HepG2 (cell line): ENCODE measurements at regions of chr5 and their contacts with region 1.

Region 1: DNA sequence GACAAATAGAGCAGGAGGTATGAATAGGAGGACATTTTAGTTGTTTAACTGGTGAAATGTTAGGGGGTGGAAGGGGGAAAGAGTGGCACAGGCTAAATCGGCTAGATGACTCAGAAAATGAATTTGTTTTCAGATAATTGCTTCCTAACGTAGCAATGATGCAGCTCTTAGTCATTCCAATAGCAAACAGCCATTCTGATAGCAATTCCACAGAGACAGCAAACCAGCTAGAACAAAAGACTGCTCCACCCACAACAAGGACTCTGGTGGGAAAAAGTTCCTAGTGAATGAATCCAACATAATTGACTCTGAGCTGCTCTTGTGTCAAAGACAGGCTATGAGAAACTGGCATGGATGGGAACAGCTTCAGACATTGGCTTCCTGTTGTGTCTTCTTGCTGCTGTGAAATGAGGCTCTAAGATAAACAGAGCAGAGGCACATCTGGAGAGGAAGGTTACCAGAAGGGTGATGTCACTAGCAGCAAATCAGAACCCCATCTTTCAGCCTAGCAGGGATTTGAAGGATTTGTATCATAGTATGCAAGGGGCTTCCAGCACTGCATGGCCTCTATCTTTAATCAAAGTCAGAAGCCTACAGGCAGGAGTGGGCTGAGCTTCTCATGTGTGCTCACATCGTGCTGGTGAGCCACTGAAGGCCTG is 28.1 kb upstream of the F2RL1 start:
- DNase-seq: peak; percentile 76
- ATAC-seq: peak; percentile 47
- H3K4me3 ChIP-seq: no peak overlapping the region
- H3K27ac ChIP-seq: no peak overlapping the region
- H3K4me1 ChIP-seq: peaks cover 48% of the 10 kb centered on the region
- H3K27me3 ChIP-seq: no peaks in the 10 kb centered on the region
- CTCF ChIP-seq: no peak
- EP300 ChIP-seq: peak in 1 of 2 experiments; percentile 54; a peak in 1 of 4 replicates
- POLR2A ChIP-seq: no peak
- RAD21 ChIP-seq: no peak

Region 2: DNA sequence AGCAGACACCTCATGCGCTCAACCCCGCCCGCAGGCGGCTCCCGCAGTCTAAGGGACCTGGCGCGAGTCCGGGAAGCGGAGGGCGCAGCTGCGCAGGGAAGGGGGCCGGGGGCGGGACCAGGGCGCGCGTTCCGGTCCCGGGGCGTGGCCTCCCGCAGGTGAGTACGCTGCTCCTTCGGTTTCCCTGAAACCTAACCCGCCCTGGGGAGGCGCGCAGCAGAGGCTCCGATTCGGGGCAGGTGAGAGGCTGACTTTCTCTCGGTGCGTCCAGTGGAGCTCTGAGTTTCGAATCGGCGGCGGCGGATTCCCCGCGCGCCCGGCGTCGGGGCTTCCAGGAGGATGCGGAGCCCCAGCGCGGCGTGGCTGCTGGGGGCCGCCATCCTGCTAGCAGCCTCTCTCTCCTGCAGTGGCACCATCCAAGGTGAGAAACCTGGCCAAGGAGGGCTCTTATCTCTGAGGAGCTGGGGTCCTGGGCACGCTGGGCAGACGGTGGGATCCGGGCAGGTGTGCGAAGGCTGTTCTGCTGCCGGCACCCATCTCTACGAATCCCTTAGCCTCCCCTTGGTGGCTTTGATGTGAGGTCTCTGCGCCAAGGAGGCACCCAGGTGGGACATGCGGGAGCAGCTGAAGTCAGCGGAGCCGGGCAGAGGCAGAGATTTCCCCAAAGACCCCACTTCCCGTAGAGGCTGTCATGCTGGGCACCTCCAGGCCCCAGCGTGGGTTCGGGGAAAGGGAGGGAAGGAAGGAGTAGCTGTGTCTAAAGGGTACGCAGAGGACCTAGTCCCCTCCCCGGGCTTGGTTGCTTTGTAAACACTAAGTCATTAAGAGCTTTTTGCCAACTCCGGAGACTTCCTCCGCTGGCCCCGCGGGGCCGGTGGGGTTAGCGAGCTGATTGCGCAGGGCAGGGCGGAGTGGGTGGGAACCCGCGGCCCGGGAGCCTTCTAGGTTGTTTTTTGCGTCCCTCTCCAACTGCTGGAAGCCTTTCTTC is 28.4 kb after region 1 on chr5 and contains the start of gene F2RL1:
- CTCF ChIA-PET with region 1: no interaction called
- POLR2A ChIA-PET with region 1: interaction called, 14 read pairs
- in situ Hi-C with region 1: no loop called
- intact Hi-C with region 1: no loop called
- DNase-seq: peak; percentile 81
- ATAC-seq: peak; percentile 95
- H3K4me3 ChIP-seq: peak within 1 kb of the TSS; percentile 77 to 84 (median 80)
- H3K27ac ChIP-seq: no peak within 1 kb of the TSS
- H3K4me1 ChIP-seq: peaks cover 37% of the 10 kb centered on the region
- H3K27me3 ChIP-seq: no peaks in the 10 kb centered on the region
- CTCF ChIP-seq: peak; percentile 48
- EP300 ChIP-seq: no peak
- POLR2A ChIP-seq: 0 out of 4 replicates have a peak, but pooled peaks of 1 of the 2 experiments have one; percentile 33
- RAD21 ChIP-seq: no peak
- total RNA-seq, gene F2RL1: 6.3 and 9.9 TPM in 2 replicates

Region 3: DNA sequence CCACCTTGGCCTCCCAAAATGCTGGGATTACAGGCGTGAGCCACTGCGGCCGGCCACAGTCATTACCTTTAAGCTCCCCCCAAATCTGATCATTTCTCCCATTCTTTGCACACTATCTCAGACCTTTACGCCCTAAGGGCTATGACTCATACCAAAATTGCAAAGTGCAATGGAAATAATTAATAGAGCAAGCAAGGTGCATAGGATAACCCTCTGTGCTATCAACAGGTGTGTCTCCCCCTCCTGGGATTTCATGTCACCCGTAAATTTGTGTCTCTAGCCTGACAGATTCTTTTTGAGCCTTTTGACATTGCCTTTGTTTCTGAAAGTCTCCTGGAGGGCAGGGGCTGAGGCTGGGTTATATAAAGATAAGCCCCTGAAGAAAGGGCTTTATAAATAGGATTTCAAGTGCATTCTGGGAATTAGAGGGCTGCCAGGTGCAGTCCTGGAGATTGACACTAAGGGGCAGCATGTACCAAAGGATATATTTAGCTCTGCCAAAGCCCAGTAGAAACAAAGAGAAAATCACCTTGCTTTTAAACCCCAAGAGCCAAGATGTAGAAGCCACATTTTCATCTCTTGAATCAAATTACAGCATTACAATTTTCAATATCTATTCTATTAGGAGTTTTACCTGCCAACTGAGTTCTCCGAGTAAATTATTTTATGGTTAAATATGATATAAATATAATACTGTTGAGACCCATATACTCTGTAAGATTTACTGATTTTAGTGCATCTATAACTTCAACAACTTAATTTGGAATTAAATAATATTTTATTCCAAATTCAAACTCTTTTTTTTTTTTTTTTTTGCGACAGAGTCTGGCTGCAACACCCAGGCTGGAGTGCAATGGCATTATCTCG is 77.3 kb after region 1 on chr5:
- CTCF ChIA-PET with region 1: no interaction called
- POLR2A ChIA-PET with region 1: no interaction called
- in situ Hi-C with region 1: no loop called
- intact Hi-C with region 1: no loop called
- DNase-seq: peak; percentile 47
- ATAC-seq: peak; percentile 82
- H3K4me3 ChIP-seq: no peak overlapping the region
- H3K27ac ChIP-seq: no peak overlapping the region
- H3K4me1 ChIP-seq: no peaks in the 10 kb centered on the region
- H3K27me3 ChIP-seq: no peaks in the 10 kb centered on the region
- CTCF ChIP-seq: peak; percentile 79
- EP300 ChIP-seq: no peak
- POLR2A ChIP-seq: no peak
- RAD21 ChIP-seq: peak; percentile 79